Adrenal gland (tissue), 19 donors: ENCODE measurements at regions of chr12 and their contacts with region 1.

Region 1: DNA sequence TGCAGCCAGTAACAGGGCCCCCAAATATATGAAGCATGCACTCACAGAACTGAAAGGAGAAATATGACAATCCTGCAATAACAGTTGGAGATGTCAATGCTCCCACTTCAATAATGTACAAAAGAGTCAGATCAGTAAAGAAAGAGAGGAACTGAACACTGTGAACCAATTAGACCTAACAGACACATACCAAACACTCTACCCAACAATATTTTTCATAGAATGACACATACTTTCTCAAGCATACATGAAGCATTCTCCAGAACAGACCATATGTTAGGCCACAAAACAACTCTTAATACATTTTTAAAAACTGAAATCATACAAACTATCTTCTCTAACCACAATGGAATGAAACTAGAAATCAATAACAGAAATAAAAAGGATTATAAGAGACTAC is 80.2 kb downstream of the ELK3 start:
- DNase-seq: no peak
- H3K4me3 ChIP-seq: no peak overlapping the region
- H3K27ac ChIP-seq: no peak overlapping the region
- H3K4me1 ChIP-seq: peaks cover 0 to 3% of the 10 kb centered on the region in 2 donors
- H3K27me3 ChIP-seq: no peaks in the 10 kb centered on the region
- CTCF ChIP-seq: no peak
- POLR2A ChIP-seq: no peak

Region 2: GRCh38 chr12:96399919-96400797 is 125.8 kb after region 1 on chr12 and contains the start of gene CDK17:
- intact Hi-C with region 1: loop called in 1 of 2 experiments (anchors 10 kb)
- DNase-seq: peak; percentile 78 to 91 (median 84)
- H3K4me3 ChIP-seq: peak within 1 kb of the TSS; percentile 66 to 96 (median 87)
- H3K27ac ChIP-seq: peak within 1 kb of the TSS; percentile 80 to 100 (median 98)
- H3K4me1 ChIP-seq: peaks cover 12 to 28% of the 10 kb centered on the region in 2 donors
- H3K27me3 ChIP-seq: no peaks in the 10 kb centered on the region
- CTCF ChIP-seq: peak in 4 of 6 experiments; percentile 12 to 53 (median 40)
- POLR2A ChIP-seq: peak; percentile 66 to 80
- total RNA-seq, gene CDK17: 10.3 to 52.6 (median 22.2) TPM